ENCODE measurements at regions of chr17 and their contacts with region 1.

Region 1: GRCh38 chr17:77280980-77281903 is 140.5 kb downstream of the SEC14L1 start:
- DNase-seq: peak; percentile 65
- ATAC-seq: peak; percentile 55
- H3K4me3 ChIP-seq: peak overlapping the region; percentile 85 to 99 (median 97)
- H3K27ac ChIP-seq: peak overlapping the region; percentile 98
- H3K4me1 ChIP-seq: peaks cover 48% of the 10 kb centered on the region
- H3K27me3 ChIP-seq: no peaks in the 10 kb centered on the region; a peak in 1 of 5 replicates
- CTCF ChIP-seq: peak; percentile 55
- EP300 ChIP-seq: no peak; a peak in 1 of 4 replicates
- POLR2A ChIP-seq: peak in 1 of 2 experiments; percentile 44; a peak in 2 of 4 replicates
- RAD21 ChIP-seq: peak; percentile 94

Region 2: DNA sequence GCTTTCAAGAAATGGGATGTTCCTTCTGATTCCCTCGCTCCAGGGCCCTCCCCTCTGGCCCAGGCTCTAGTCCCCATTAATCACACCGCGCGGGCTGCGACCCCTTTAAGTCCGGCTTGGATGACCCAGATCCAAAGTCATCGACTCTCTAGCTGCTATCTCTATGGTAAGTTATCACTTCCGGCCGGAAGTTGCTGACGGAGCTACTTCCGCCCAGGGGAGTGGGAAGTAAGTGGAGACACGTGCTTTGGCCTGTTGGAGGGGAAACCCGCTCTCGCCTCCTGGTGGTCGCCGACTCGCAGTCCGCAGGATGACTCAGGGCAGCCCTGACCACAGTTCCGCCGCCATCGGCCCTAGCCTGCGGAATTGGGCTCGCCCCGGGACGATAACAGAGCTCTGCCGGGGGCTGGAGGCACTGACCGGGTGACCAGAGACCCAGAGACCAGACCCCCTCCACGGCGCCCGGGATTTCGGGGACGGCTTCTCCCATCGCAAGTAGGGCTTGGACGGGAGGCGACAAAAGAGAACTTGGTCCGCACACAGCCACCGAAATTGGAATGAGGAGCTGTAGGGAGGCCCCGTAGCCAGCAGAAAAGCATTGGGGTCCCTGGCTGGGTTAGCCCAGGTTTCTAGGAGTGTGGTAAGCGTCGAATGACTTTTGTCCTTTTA is 192.7 kb before region 1 on chr17:
- CTCF ChIA-PET with region 1: no interaction called
- POLR2A ChIA-PET with region 1: interaction called, 11 read pairs
- in situ Hi-C with region 1: no loop called
- intact Hi-C with region 1: no loop called
- DNase-seq: peak; percentile 99
- ATAC-seq: peak; percentile 96
- H3K4me3 ChIP-seq: peak overlapping the region; percentile 75 to 94 (median 86)
- H3K27ac ChIP-seq: peak overlapping the region; percentile 91
- H3K4me1 ChIP-seq: peaks cover 56% of the 10 kb centered on the region
- H3K27me3 ChIP-seq: no peaks in the 10 kb centered on the region; a peak in 1 of 5 replicates
- CTCF ChIP-seq: peak; percentile 99
- EP300 ChIP-seq: peak in 1 of 2 experiments; percentile 45; a peak in 1 of 4 replicates
- POLR2A ChIP-seq: peak; percentile 79 to 92
- RAD21 ChIP-seq: peak; percentile 88

Region 3: GRCh38 chr17:77304051-77304745 is 23.0 kb after region 1 on chr17:
- CTCF ChIA-PET with region 1: no interaction called
- POLR2A ChIA-PET with region 1: interaction called, 335 read pairs
- in situ Hi-C with region 1: no loop called
- intact Hi-C with region 1: loop called (anchors 1 kb)
- DNase-seq: no peak
- ATAC-seq: no peak
- H3K4me3 ChIP-seq: no peak overlapping the region
- H3K27ac ChIP-seq: peak overlapping the region; percentile 6
- H3K4me1 ChIP-seq: peaks cover 72% of the 10 kb centered on the region
- H3K27me3 ChIP-seq: no peaks in the 10 kb centered on the region
- CTCF ChIP-seq: no peak
- EP300 ChIP-seq: no peak
- POLR2A ChIP-seq: no peak
- RAD21 ChIP-seq: no peak

Region 4: GRCh38 chr17:77319211-77320043 is 38.2 kb after region 1 on chr17:
- CTCF ChIA-PET with region 1: no interaction called
- POLR2A ChIA-PET with region 1: interaction called, 31 read pairs
- in situ Hi-C with region 1: no loop called
- intact Hi-C with region 1: loop called (anchors 5 kb)
- DNase-seq: no peak
- ATAC-seq: no peak
- H3K4me3 ChIP-seq: no peak overlapping the region
- H3K27ac ChIP-seq: no peak overlapping the region
- H3K4me1 ChIP-seq: peaks cover 52% of the 10 kb centered on the region
- H3K27me3 ChIP-seq: no peaks in the 10 kb centered on the region
- CTCF ChIP-seq: no peak
- EP300 ChIP-seq: no peak
- POLR2A ChIP-seq: no peak
- RAD21 ChIP-seq: no peak

Region 5: GRCh38 chr17:77354420-77355241 is 73.4 kb after region 1 on chr17:
- CTCF ChIA-PET with region 1: no interaction called
- POLR2A ChIA-PET with region 1: interaction called, 16 read pairs
- in situ Hi-C with region 1: no loop called
- intact Hi-C with region 1: no loop called
- DNase-seq: peak; percentile 93
- ATAC-seq: peak; percentile 80
- H3K4me3 ChIP-seq: peak overlapping the region; percentile 7 to 39 (median 12); a peak in 3 of 6 replicates
- H3K27ac ChIP-seq: peak overlapping the region; percentile 79
- H3K4me1 ChIP-seq: peaks cover 73% of the 10 kb centered on the region
- H3K27me3 ChIP-seq: no peaks in the 10 kb centered on the region
- CTCF ChIP-seq: peak; percentile 66
- EP300 ChIP-seq: peak in 1 of 2 experiments; percentile 70; a peak in 3 of 4 replicates
- POLR2A ChIP-seq: peak; percentile 26 to 32; a peak in 1 of 4 replicates
- RAD21 ChIP-seq: 0 out of 2 replicates have a peak, but pooled peaks have one; percentile 44

Region 6: GRCh38 chr17:77391668-77392375 is 110.6 kb after region 1 on chr17:
- CTCF ChIA-PET with region 1: no interaction called
- POLR2A ChIA-PET with region 1: interaction called, 61 read pairs
- in situ Hi-C with region 1: no loop called
- intact Hi-C with region 1: loop called (anchors 5 kb)
- DNase-seq: no peak
- ATAC-seq: peak; percentile 7
- H3K4me3 ChIP-seq: peak overlapping the region; percentile 25 to 62 (median 34)
- H3K27ac ChIP-seq: peak overlapping the region; percentile 91
- H3K4me1 ChIP-seq: peaks cover 90% of the 10 kb centered on the region
- H3K27me3 ChIP-seq: no peaks in the 10 kb centered on the region
- CTCF ChIP-seq: no peak
- EP300 ChIP-seq: no peak
- POLR2A ChIP-seq: no peak
- RAD21 ChIP-seq: no peak

Region 7: DNA sequence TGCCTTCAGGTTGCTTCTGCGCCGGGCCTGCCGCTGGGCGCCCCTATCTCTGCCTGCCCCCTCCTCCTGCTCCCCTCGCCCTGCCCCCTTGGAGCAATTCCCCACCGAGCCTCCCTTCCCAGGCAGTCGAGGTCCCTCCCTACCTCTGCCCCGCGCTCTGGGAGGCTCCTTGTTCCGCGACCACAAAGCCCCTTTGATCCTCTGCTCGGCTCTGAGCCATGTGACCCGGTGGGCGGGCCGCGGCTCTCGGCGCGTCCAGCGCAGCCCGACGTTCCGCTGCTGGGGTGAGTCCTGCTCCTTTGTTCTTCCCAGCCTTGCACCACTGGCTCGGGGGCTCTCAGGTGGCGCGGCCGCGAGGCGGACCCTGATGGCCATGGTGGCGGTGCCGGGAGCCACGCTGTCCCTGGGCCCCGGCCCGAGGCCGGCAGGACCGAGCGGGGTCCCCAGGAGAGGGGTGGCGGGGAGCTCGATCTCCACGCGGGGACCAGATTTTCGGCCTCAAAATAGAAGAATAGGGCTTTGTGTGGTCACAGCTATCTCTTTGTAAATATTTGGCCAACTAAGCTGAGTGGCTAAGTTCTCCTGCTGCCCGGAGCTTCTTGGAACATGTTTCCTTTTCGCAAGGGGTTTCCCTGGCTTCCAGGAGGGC is 170.1 kb after region 1 on chr17:
- CTCF ChIA-PET with region 1: no interaction called
- POLR2A ChIA-PET with region 1: interaction called, 110 read pairs
- in situ Hi-C with region 1: loop called (anchors 5 kb)
- intact Hi-C with region 1: loop called (anchors 5 kb)
- DNase-seq: peak; percentile 96
- ATAC-seq: peak; percentile 77
- H3K4me3 ChIP-seq: peak overlapping the region; percentile 61 to 91 (median 73)
- H3K27ac ChIP-seq: peak overlapping the region; percentile 95
- H3K4me1 ChIP-seq: peaks cover 59% of the 10 kb centered on the region
- H3K27me3 ChIP-seq: no peaks in the 10 kb centered on the region; a peak in 1 of 5 replicates
- CTCF ChIP-seq: peak; percentile 21; the same call in 1 of the 2 replicates
- EP300 ChIP-seq: peak in 1 of 2 experiments; percentile 71; a peak in 2 of 4 replicates
- POLR2A ChIP-seq: peak in 1 of 2 experiments; percentile 50; a peak in 1 of 4 replicates
- RAD21 ChIP-seq: peak; percentile 13; the same call in 1 of the 2 replicates

Region 8: DNA sequence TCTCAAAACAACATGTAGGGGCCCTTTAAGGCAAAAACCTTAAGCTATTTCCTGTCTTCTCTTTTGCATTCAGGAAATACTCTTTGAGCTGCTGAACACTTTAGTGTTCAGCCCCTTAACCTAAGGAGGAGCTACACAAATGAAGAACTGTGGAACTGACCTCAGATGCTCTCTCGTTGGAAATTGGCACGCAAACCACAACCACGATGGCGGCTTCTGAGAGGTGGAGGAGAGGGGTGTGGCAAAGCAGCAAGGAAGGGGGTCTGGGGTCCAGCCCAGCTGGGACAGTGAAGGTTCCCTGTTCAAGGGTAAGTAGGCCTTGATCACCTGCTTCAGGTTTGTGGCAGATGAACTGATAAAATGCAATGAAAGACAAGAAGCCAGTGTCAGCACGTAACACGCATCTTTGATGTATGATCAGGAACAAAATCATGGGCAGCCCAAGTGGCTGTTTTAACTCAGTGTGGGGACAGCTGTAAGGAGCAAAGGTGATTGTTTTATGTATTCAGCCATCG is 385.7 kb after region 1 on chr17:
- CTCF ChIA-PET with region 1: no interaction called
- POLR2A ChIA-PET with region 1: no interaction called
- in situ Hi-C with region 1: no loop called
- intact Hi-C with region 1: no loop called
- DNase-seq: no peak
- ATAC-seq: no peak
- H3K4me3 ChIP-seq: no peak overlapping the region
- H3K27ac ChIP-seq: no peak overlapping the region
- H3K4me1 ChIP-seq: no peaks in the 10 kb centered on the region
- H3K27me3 ChIP-seq: peaks cover 1 to 9% of the 10 kb centered on the region in 2 experiments; a peak in 2 of 5 replicates
- CTCF ChIP-seq: no peak
- EP300 ChIP-seq: no peak
- POLR2A ChIP-seq: no peak
- RAD21 ChIP-seq: no peak

Measured in HepG2 (cell line).